Caco-2 (cell line): ENCODE measurements at regions of chr20 and their contacts with region 1.

Region 1: GRCh38 chr20:11890331-11891080 is 27.2 kb upstream of the BTBD3 start:
- DNase-seq: peak; percentile 96 to 97
- H3K4me3 ChIP-seq: peak overlapping the region; percentile 85
- H3K4me3 Mint-ChIP-seq: peak overlapping the region; percentile 75
- H3K27ac Mint-ChIP-seq: peak overlapping the region; percentile 72
- H3K4me1 ChIP-seq: peaks cover 10% of the 10 kb centered on the region; the same call in 1 of the 2 replicates
- H3K4me1 Mint-ChIP-seq: peaks cover 20% of the 10 kb centered on the region
- H3K27me3 ChIP-seq: no peaks in the 10 kb centered on the region
- H3K27me3 Mint-ChIP-seq: no peaks in the 10 kb centered on the region
- CTCF ChIP-seq: no peak

Region 2: DNA sequence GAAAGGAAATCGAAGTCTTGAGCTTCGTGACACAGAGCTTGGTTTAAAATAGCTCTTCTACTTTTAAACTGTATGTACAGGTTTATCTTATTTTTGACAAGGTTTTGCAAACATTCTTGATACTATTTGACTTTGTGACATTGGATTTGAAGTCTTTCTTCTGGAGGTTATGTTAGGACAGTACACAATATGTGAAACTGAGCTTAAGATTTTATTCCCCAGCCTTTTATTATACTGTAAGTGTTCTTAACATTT is 68.0 kb before region 1 on chr20:
- CTCF ChIA-PET with region 1: no interaction called
- POLR2A ChIA-PET with region 1: no interaction called
- intact Hi-C with region 1: loop called (anchors 1 kb)
- DNase-seq: no peak
- H3K4me3 ChIP-seq: no peak overlapping the region
- H3K4me3 Mint-ChIP-seq: peak overlapping the region; percentile 25
- H3K27ac Mint-ChIP-seq: peak overlapping the region; percentile 91
- H3K4me1 ChIP-seq: peaks cover 41% of the 10 kb centered on the region
- H3K4me1 Mint-ChIP-seq: peaks cover 15% of the 10 kb centered on the region
- H3K27me3 ChIP-seq: no peaks in the 10 kb centered on the region
- H3K27me3 Mint-ChIP-seq: no peaks in the 10 kb centered on the region
- CTCF ChIP-seq: no peak

Region 3: GRCh38 chr20:11935212-11936154 is 45.0 kb after region 1 on chr20:
- CTCF ChIA-PET with region 1: no interaction called
- POLR2A ChIA-PET with region 1: no interaction called
- intact Hi-C with region 1: no loop called
- DNase-seq: no peak
- H3K4me3 ChIP-seq: no peak overlapping the region
- H3K4me3 Mint-ChIP-seq: no peak overlapping the region
- H3K27ac Mint-ChIP-seq: no peak overlapping the region
- H3K4me1 ChIP-seq: no peaks in the 10 kb centered on the region
- H3K4me1 Mint-ChIP-seq: peaks cover 6% of the 10 kb centered on the region
- H3K27me3 ChIP-seq: no peaks in the 10 kb centered on the region
- H3K27me3 Mint-ChIP-seq: no peaks in the 10 kb centered on the region
- CTCF ChIP-seq: no peak

Region 4: DNA sequence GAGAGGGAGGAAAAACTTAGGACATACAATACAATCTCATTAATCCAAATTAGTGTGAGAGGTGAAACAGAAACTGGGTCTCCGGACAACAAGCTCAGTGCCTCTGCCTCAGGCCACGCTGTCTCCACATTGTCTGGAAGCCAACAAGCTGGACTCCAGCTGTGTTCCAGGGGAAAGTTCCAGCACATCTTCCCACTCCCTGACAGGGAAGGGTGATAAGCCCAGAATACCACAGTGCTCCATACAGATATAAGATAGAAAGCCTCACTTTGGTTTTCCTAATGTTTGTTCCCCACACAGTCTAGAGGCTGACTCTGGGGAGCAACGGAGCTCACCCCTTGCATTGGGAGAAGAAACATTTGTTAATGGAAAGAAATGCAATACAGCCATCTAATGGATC is 1001.1 kb after region 1 on chr20:
- CTCF ChIA-PET with region 1: no interaction called
- POLR2A ChIA-PET with region 1: no interaction called
- intact Hi-C with region 1: loop called (anchors 10 kb)
- DNase-seq: no peak
- H3K4me3 ChIP-seq: no peak overlapping the region
- H3K4me3 Mint-ChIP-seq: no peak overlapping the region
- H3K27ac Mint-ChIP-seq: no peak overlapping the region
- H3K4me1 ChIP-seq: no peaks in the 10 kb centered on the region
- H3K4me1 Mint-ChIP-seq: no peaks in the 10 kb centered on the region
- H3K27me3 ChIP-seq: peaks cover 1% of the 10 kb centered on the region; the same call in 1 of the 2 replicates
- H3K27me3 Mint-ChIP-seq: peaks cover 31% of the 10 kb centered on the region
- CTCF ChIP-seq: no peak